MCF 10A (cell line): ENCODE measurements at regions of chr2 and their contacts with region 1.

Region 1: DNA sequence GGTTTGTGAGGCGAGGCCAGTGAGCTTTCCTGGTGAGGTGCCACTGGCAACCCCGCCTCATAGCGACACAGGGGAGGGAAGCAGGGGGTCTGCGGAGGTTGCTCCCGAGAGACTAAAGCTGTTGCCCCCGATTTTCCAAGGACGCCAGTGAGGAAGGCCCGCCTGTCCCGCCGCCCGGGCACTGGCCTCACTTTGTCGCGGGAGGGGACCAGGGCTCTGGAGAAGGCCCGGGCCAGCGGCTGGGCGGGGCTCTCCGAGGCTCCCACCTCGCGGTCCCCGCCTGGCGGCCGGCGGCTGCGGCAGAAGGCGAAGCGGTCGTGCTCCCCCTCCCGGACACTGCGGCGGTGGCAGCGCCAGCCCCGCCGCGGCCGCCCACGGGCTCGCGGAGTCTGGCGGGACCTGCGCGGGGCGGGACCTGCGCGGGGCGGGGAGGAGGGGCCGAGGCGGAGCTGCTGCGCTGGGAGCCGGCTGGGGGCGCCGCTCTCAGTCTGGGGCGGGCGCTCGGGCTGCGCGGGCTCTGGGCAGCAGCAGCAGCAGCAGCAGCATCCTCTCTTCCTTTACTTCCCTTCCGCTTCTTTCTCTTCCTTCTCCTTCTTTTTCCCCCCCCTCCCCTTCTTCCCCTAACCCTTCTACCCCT is at the start of gene MAP2:
- DNase-seq: peak; percentile 77
- H3K4me3 Mint-ChIP-seq: peak within 1 kb of the TSS; percentile 81
- H3K27ac Mint-ChIP-seq: no peak within 1 kb of the TSS
- H3K4me1 Mint-ChIP-seq: peaks cover 18% of the 10 kb centered on the region
- H3K27me3 Mint-ChIP-seq: no peaks in the 10 kb centered on the region
- CTCF ChIP-seq: peak; percentile 87
- total RNA-seq, gene MAP2: 16.2 and 40.2 TPM in 2 replicates

Region 2: GRCh38 chr2:208945719-208946256 is 477.9 kb before region 1 on chr2:
- CTCF ChIA-PET with region 1: no interaction called
- POLR2A ChIA-PET with region 1: no interaction called
- intact Hi-C with region 1: no loop called
- DNase-seq: no peak
- H3K4me3 Mint-ChIP-seq: no peak overlapping the region
- H3K27ac Mint-ChIP-seq: no peak overlapping the region
- H3K4me1 Mint-ChIP-seq: no peaks in the 10 kb centered on the region
- H3K27me3 Mint-ChIP-seq: no peaks in the 10 kb centered on the region
- CTCF ChIP-seq: no peak

Region 3: GRCh38 chr2:209351636-209352035 is 72.0 kb before region 1 on chr2:
- CTCF ChIA-PET with region 1: interaction called, 12 read pairs
- POLR2A ChIA-PET with region 1: no interaction called
- intact Hi-C with region 1: no loop called
- DNase-seq: no peak
- H3K4me3 Mint-ChIP-seq: no peak overlapping the region
- H3K27ac Mint-ChIP-seq: no peak overlapping the region
- H3K4me1 Mint-ChIP-seq: no peaks in the 10 kb centered on the region
- H3K27me3 Mint-ChIP-seq: no peaks in the 10 kb centered on the region
- CTCF ChIP-seq: no peak

Region 4: GRCh38 chr2:209463226-209463625 is 39.5 kb after region 1 on chr2:
- CTCF ChIA-PET with region 1: interaction called, 14 read pairs
- POLR2A ChIA-PET with region 1: no interaction called
- intact Hi-C with region 1: no loop called
- DNase-seq: peak; percentile 10
- H3K4me3 Mint-ChIP-seq: no peak overlapping the region
- H3K27ac Mint-ChIP-seq: no peak overlapping the region
- H3K4me1 Mint-ChIP-seq: peaks cover 6% of the 10 kb centered on the region
- H3K27me3 Mint-ChIP-seq: no peaks in the 10 kb centered on the region
- CTCF ChIP-seq: no peak

Region 5: DNA sequence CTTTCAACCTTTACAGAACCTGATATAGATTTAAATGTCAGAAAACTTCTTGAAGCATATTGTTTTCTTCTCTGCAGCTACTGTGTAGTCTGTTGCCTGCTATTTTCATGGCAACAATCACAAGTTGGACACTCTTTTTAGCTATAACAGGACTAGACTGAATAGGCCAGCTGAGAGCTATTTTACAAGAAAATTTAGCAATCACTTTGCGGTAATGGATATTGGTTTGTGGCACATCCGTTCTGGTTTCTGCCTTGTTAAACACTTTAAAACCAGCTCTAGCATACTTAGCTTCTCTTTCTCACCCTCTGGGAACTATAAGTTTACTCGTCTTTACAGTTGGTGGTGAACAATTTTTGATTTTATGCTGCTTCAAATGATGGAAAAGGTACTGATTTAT is 125.9 kb after region 1 on chr2:
- CTCF ChIA-PET with region 1: interaction called, 87 read pairs
- POLR2A ChIA-PET with region 1: no interaction called
- intact Hi-C with region 1: no loop called
- DNase-seq: no peak
- H3K4me3 Mint-ChIP-seq: no peak overlapping the region
- H3K27ac Mint-ChIP-seq: no peak overlapping the region
- H3K4me1 Mint-ChIP-seq: no peaks in the 10 kb centered on the region
- H3K27me3 Mint-ChIP-seq: no peaks in the 10 kb centered on the region
- CTCF ChIP-seq: no peak

Region 6: GRCh38 chr2:209960676-209961630 is 537.3 kb after region 1 on chr2:
- CTCF ChIA-PET with region 1: interaction called, 14 read pairs
- POLR2A ChIA-PET with region 1: interaction called, 3 read pairs
- intact Hi-C with region 1: loop called (anchors 1 kb)
- DNase-seq: peak; percentile 73
- H3K4me3 Mint-ChIP-seq: no peak overlapping the region
- H3K27ac Mint-ChIP-seq: no peak overlapping the region
- H3K4me1 Mint-ChIP-seq: no peaks in the 10 kb centered on the region
- H3K27me3 Mint-ChIP-seq: no peaks in the 10 kb centered on the region
- CTCF ChIP-seq: peak; percentile 68